Common myeloid progenitor, CD34-positive (primary cell): ENCODE measurements at regions of chr22 and their contacts with region 1.

Region 1: DNA sequence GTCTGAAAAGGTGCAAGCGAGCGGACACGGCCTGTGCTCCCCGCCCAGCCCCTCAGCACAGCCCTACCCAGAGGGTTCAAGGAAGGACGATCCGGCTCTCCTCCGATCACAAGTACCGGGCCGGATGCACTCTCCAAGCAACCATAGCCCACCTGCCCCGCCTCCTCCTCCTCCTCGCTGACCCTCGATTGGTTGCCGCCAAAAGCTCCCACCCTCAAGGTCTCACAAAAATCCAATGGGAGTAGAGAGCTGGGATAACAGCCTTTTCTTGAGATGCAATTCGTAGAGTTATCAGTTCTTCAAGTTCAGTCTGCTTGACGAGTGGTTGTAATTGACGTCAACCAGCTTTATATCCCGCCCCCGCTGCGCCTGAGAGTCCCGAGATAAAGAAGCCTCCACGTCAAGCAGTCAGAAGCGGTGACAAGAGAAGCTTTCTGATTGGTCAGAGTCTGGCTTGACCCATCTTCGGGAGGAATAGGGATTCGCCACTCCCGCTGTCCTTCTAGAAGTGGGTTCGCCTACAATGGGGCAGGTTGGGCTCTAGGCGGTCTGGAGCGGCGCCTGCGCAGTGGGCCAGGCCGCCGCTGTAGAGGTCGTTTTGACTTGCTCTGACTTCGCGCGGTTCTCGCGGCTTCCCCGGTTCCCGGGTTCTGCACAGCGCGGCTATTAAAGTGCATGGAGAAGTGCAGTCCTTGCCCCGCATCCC is at the start of gene IFT27:
- DNase-seq: peak; percentile 100
- H3K4me3 ChIP-seq: peak within 1 kb of the TSS; percentile 59 to 87 (median 81)
- H3K27ac ChIP-seq: peak within 1 kb of the TSS; percentile 58 to 81
- H3K4me1 ChIP-seq: peaks cover 3 to 18% (median 13%) of the 10 kb centered on the region in 4 experiments
- H3K27me3 ChIP-seq: no peaks in the 10 kb centered on the region

Region 2: DNA sequence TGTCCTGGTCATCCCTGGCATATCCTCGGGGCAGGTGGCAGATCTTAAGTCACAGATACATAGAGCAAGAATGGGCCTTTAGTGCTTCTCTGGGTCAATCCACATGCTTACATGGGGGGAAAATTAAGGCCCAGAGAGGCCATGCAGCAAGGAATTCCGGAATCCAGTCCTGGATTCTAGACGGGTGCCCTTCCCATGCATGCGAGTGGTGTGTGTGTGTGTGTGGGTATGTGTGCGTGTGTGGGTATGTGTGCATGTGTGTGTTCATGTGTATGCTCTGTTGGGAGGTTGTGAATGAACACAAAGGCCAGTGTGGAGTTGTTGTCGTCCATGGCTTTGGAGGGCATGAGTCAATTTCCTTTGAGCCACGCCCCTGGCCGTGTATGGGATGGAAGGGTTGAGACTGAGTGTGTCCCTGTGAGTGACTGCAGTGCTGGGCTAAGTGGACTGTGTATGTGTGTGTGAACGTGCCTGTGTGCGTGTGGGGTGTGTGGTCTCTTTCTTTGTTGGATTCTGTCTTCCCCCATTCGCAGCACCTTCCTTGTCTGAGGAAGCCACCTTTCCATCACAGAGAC is 213.8 kb before region 1 on chr22:
- CTCF ChIA-PET with region 1: interaction called, 11 read pairs
- POLR2A ChIA-PET with region 1: no interaction called
- DNase-seq: no peak
- H3K4me3 ChIP-seq: no peak overlapping the region
- H3K27ac ChIP-seq: no peak overlapping the region
- H3K4me1 ChIP-seq: peaks cover 0 to 3% (median 2%) of the 10 kb centered on the region in 4 experiments
- H3K27me3 ChIP-seq: peaks cover 0 to 44% (median 8%) of the 10 kb centered on the region in 5 experiments

Region 3: DNA sequence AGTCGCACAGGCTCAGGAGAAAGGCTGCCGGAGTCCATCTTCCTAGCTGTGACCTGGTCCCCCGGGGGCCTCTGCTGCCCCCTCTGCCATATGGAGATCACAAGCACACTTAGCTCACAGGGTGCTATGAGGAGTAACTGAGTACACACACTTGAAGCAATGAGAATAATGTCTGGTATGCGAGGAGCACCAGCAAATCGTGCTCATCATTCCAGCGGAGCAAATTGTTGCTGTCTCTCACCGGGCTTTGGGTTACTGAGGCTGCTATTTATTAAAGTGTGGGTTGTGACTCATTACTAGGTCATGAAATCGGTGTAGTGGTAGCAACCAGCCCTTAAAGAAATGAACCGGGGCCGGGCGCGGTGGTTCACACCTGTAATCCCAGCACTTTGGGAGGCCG is 199.1 kb before region 1 on chr22:
- CTCF ChIA-PET with region 1: no interaction called
- POLR2A ChIA-PET with region 1: no interaction called
- DNase-seq: no peak
- H3K4me3 ChIP-seq: no peak overlapping the region
- H3K27ac ChIP-seq: no peak overlapping the region
- H3K4me1 ChIP-seq: no peaks in the 10 kb centered on the region
- H3K27me3 ChIP-seq: peaks cover 0 to 7% (median 0%) of the 10 kb centered on the region in 5 experiments

Region 4: GRCh38 chr22:36757668-36758211 is 18.4 kb before region 1 on chr22:
- CTCF ChIA-PET with region 1: interaction called, 54 read pairs
- POLR2A ChIA-PET with region 1: no interaction called
- DNase-seq: peak; percentile 76 to 85 (median 80)
- H3K4me3 ChIP-seq: no peak overlapping the region
- H3K27ac ChIP-seq: no peak overlapping the region
- H3K4me1 ChIP-seq: peaks cover 0 to 8% (median 0%) of the 10 kb centered on the region in 4 experiments
- H3K27me3 ChIP-seq: peaks cover 0 to 18% (median 8%) of the 10 kb centered on the region in 5 experiments

Region 5: GRCh38 chr22:36762687-36763260 is 13.3 kb before region 1 on chr22:
- CTCF ChIA-PET with region 1: interaction called, 54 read pairs
- POLR2A ChIA-PET with region 1: no interaction called
- DNase-seq: no peak
- H3K4me3 ChIP-seq: no peak overlapping the region
- H3K27ac ChIP-seq: no peak overlapping the region
- H3K4me1 ChIP-seq: peaks cover 0 to under 1% (median 0%) of the 10 kb centered on the region in 4 experiments
- H3K27me3 ChIP-seq: no peaks in the 10 kb centered on the region